HEK293 (cell line): ENCODE measurements at regions of chr6 and their contacts with region 1.

Region 1: DNA sequence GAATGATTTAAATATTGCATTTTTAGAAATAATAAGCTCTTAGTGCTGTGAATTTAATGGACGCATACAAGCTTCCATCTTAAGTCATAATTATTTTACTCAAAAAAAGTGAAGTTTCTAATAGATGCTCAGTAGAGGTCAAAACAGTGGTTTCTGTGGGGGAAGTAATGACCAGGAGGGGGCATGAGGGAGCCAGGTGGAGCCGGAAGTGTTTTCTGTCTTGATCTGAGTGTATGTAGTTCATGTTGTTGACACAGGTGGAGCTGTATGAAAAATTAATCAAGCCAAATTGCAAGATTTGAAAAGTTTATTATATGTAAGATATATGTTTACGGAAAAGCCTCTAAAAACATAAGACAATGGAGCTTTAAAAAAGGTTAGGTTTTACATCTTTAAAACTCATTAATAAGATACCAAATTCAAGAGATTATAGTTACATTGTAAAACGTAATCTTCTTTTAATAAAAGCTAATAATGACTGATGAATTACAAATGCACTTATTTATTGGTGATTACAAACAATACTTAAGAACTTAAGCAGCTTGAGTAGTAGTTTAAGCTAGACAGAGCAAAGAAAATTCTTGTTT is 68.0 kb downstream of the PLAGL1 start:
- H3K4me3 ChIP-seq: no peak overlapping the region
- H3K27ac ChIP-seq: no peak overlapping the region
- H3K4me1 ChIP-seq: no peaks in the 10 kb centered on the region
- CTCF ChIP-seq: no peak; the same call in 1 of the 2 replicates

Region 2: GRCh38 chr6:143570147-143570853 is 369.8 kb before region 1 on chr6:
- CTCF ChIA-PET with region 1: interaction called, 23 read pairs
- POLR2A ChIA-PET with region 1: no interaction called
- H3K4me3 ChIP-seq: no peak overlapping the region
- H3K27ac ChIP-seq: no peak overlapping the region
- H3K4me1 ChIP-seq: no peaks in the 10 kb centered on the region
- CTCF ChIP-seq: no peak

Region 3: DNA sequence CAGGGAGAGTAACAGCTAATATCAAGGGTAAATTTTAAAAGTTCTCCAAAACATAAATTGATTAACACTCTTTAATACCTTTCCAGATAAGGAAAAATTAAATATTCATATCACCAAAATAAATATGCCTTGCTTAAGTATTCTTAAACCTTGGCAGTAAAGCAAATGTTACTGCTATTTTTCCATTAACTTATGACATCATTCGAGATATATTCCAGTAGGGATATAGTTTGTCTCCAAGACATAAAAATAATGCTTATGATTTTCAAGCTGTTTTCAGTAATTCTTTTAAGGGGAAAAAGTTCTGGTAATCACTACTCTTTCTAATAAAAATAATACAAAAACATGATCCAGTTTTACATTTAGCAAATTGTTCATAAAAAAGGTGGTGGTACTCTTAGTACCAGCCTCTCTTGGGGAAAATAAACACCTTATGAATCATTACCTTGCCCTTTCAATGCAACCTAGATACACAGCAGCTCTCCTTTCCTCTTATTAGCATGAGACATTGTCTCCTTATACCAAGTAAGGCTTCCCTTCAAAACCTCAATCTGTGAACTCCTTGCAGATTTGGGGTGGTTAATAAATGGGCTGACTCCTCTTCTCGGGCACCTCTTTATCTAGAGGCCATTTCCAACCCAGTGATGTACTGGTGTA is 128.5 kb before region 1 on chr6:
- CTCF ChIA-PET with region 1: no interaction called
- POLR2A ChIA-PET with region 1: no interaction called
- H3K4me3 ChIP-seq: no peak overlapping the region
- H3K27ac ChIP-seq: no peak overlapping the region
- H3K4me1 ChIP-seq: no peaks in the 10 kb centered on the region
- CTCF ChIP-seq: no peak

Region 4: DNA sequence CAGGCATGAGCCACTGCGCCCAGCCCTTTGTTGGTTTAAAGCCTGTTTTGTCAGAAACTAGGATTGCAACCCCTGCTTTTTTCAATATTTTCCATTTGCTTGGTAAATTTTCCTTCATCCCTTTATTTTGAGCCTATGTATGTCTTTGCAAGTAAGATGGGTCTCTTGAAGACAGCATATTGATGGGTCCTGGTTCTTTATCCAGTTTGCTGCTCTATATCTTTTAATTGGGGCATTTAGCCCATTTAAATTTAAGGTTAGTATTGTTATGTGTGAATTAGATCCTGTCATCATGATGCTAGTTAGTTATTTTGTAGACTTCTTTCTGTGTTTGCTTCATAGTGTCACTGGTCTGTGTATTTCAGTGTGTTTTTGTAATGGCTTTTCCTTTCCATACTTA is 29.1 kb before region 1 on chr6:
- CTCF ChIA-PET with region 1: interaction called, 14 read pairs
- POLR2A ChIA-PET with region 1: no interaction called
- H3K4me3 ChIP-seq: no peak overlapping the region
- H3K27ac ChIP-seq: no peak overlapping the region
- H3K4me1 ChIP-seq: no peaks in the 10 kb centered on the region
- CTCF ChIP-seq: no peak

Region 5: GRCh38 chr6:143961886-143962873 is 22.1 kb after region 1 on chr6:
- CTCF ChIA-PET with region 1: interaction called, 120 read pairs
- POLR2A ChIA-PET with region 1: interaction called, 3 read pairs
- H3K4me3 ChIP-seq: no peak overlapping the region
- H3K27ac ChIP-seq: no peak overlapping the region
- H3K4me1 ChIP-seq: 0 out of 2 replicates have a peak, but pooled peaks cover 2% of the 10 kb centered on the region
- CTCF ChIP-seq: no peak

Region 6: GRCh38 chr6:143986463-143987065 is 46.5 kb after region 1 on chr6:
- CTCF ChIA-PET with region 1: interaction called, 12 read pairs
- POLR2A ChIA-PET with region 1: no interaction called
- H3K4me3 ChIP-seq: no peak overlapping the region
- H3K27ac ChIP-seq: no peak overlapping the region
- H3K4me1 ChIP-seq: no peaks in the 10 kb centered on the region
- CTCF ChIP-seq: no peak

Region 7: GRCh38 chr6:144013486-144013909 is 73.4 kb after region 1 on chr6:
- CTCF ChIA-PET with region 1: interaction called, 81 read pairs
- POLR2A ChIA-PET with region 1: interaction called, 4 read pairs
- H3K4me3 ChIP-seq: no peak overlapping the region
- H3K27ac ChIP-seq: no peak overlapping the region
- H3K4me1 ChIP-seq: no peaks in the 10 kb centered on the region
- CTCF ChIP-seq: peak; percentile 65

Region 8: GRCh38 chr6:144305985-144306384 is 365.9 kb after region 1 on chr6:
- CTCF ChIA-PET with region 1: no interaction called
- POLR2A ChIA-PET with region 1: no interaction called
- H3K4me3 ChIP-seq: no peak overlapping the region
- H3K27ac ChIP-seq: no peak overlapping the region
- H3K4me1 ChIP-seq: 0 out of 2 replicates have a peak, but pooled peaks cover 6% of the 10 kb centered on the region
- CTCF ChIP-seq: no peak

Region 9: GRCh38 chr6:144395014-144395413 is 454.9 kb after region 1 on chr6:
- CTCF ChIA-PET with region 1: no interaction called
- POLR2A ChIA-PET with region 1: no interaction called
- H3K4me3 ChIP-seq: no peak overlapping the region
- H3K27ac ChIP-seq: no peak overlapping the region
- H3K4me1 ChIP-seq: no peaks in the 10 kb centered on the region
- CTCF ChIP-seq: no peak